ENCODE measurements at regions of chr12 and their contacts with region 1.

Region 1: GRCh38 chr12:3135522-3136461 is 58.6 kb downstream of the TSPAN9 start:
- DNase-seq: peak; percentile 52
- H3K4me3 Mint-ChIP-seq: no peak overlapping the region
- H3K27ac Mint-ChIP-seq: no peak overlapping the region
- H3K4me1 Mint-ChIP-seq: no peaks in the 10 kb centered on the region
- H3K27me3 Mint-ChIP-seq: peaks cover 81% of the 10 kb centered on the region

Region 2: DNA sequence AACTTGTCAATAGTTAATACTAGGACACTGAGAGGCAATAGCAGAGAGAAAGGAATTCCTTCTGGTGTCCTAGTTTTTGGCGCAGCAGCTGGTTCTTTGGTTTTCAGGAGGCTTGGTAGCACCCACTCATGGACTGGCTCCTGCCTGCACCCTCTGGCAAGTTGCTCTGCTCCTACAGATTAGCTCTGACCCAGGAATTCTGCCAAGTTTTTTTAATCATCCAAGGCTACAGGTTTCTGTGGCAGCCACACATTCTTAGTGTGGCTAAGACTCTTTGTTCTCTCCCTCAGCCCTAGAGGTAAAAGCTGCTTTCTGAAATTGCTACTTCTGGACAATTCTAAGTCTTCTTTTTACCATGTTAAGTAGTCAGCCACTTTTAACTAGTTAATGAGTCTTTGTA is 413.0 kb before region 1 on chr12:
- CTCF ChIA-PET with region 1: no interaction called
- DNase-seq: no peak
- H3K4me3 Mint-ChIP-seq: no peak overlapping the region
- H3K27ac Mint-ChIP-seq: no peak overlapping the region
- H3K4me1 Mint-ChIP-seq: no peaks in the 10 kb centered on the region
- H3K27me3 Mint-ChIP-seq: peaks cover 4% of the 10 kb centered on the region

Region 3: DNA sequence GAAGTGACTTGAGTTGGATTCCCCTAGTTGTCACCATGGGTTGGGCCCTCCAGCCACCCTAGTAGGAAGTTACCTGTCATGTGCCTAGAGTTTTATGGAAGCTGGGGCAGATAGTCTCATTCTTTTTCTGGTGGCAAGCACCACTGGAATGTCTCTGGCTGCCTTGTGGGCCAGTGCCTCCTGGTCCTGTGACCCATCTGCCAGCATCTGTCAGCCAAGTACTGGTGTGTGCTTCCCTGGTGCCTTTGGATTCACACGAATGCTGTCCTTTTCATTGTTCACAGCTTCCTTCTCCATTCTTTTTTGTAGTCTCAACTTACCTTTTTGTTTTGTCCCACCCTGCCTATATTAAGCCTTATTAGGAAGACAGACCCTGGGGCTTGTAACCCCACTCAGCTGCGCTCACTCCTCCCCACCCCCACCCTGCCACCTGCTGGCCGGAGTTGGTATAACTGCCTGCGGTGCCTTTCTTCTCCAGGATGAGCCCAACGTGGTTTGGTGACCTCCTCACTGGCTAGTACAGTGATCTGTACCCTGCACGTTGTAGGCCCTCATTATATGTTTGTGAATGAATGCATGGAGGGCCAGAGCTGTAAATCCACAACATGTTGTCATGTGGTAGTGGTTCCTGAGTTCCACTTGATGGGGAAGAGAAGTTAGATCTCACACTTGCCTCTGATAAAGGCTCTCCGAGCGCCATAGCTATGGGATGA is 67.1 kb after region 1 on chr12:
- CTCF ChIA-PET with region 1: interaction called, 17 read pairs
- DNase-seq: peak; percentile 74
- H3K4me3 Mint-ChIP-seq: no peak overlapping the region
- H3K27ac Mint-ChIP-seq: no peak overlapping the region
- H3K4me1 Mint-ChIP-seq: peaks cover 7% of the 10 kb centered on the region
- H3K27me3 Mint-ChIP-seq: peaks cover 59% of the 10 kb centered on the region

Region 4: GRCh38 chr12:3275171-3276041 is 139.6 kb after region 1 on chr12:
- CTCF ChIA-PET with region 1: interaction called, 58 read pairs
- DNase-seq: peak; percentile 78
- H3K4me3 Mint-ChIP-seq: no peak overlapping the region
- H3K27ac Mint-ChIP-seq: no peak overlapping the region
- H3K4me1 Mint-ChIP-seq: peaks cover 2% of the 10 kb centered on the region
- H3K27me3 Mint-ChIP-seq: peaks cover 22% of the 10 kb centered on the region

Region 5: GRCh38 chr12:3342056-3342455 is 206.3 kb after region 1 on chr12:
- CTCF ChIA-PET with region 1: no interaction called
- DNase-seq: no peak
- H3K4me3 Mint-ChIP-seq: no peak overlapping the region
- H3K27ac Mint-ChIP-seq: no peak overlapping the region
- H3K4me1 Mint-ChIP-seq: no peaks in the 10 kb centered on the region
- H3K27me3 Mint-ChIP-seq: peaks cover 39% of the 10 kb centered on the region

Measured in activated naive CD4-positive, alpha-beta T cell treated with anti-CD3 and anti-CD28 coated beads, Interleukin-2, amount 10 ng/mL, durations not matched to agents 7 days and 5 days (primary cell).